ENCODE measurements at regions of chr2 and their contacts with region 1.

Region 1: GRCh38 chr2:120067789-120068658 is 55.1 kb downstream of the EPB41L5 start:
- DNase-seq: no peak
- H3K4me3 ChIP-seq: no peak overlapping the region
- H3K27ac ChIP-seq: no peak overlapping the region
- H3K4me1 ChIP-seq: peaks cover 14% of the 10 kb centered on the region
- H3K27me3 ChIP-seq: no peaks in the 10 kb centered on the region
- CTCF ChIP-seq: no peak

Region 2: DNA sequence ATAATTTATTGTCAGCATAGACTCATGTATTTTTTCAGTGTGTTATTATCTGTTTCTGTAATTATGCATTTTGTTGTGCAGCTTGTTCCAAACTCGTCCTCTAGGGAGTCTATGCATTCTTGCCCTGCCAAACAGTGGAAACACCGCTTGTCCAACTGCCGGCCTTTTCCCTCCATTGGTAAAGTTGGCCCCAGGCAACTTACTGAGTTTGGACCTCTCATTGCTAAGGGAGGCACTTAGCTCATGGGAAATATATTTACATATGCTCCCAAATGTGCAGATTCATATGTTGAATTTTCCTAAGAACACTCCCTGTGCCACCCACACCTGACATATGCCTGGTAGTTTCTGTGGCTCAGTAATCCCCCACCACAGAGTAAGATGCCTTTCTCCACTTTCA is 57.2 kb after region 1 on chr2:
- CTCF ChIA-PET with region 1: no interaction called
- POLR2A ChIA-PET with region 1: interaction called, 10 read pairs
- intact Hi-C with region 1: no loop called
- DNase-seq: no peak
- H3K4me3 ChIP-seq: no peak overlapping the region
- H3K27ac ChIP-seq: no peak overlapping the region
- H3K4me1 ChIP-seq: no peaks in the 10 kb centered on the region
- H3K27me3 ChIP-seq: no peaks in the 10 kb centered on the region
- CTCF ChIP-seq: 0 out of 2 replicates have a peak, but pooled peaks have one; percentile 13